HCT116 (cell line): ENCODE measurements at regions of chr2 and their contacts with region 1.

Region 1: GRCh38 chr2:127759931-127760330 is 51.0 kb downstream of the WDR33 start:
- DNase-seq: no peak
- ATAC-seq: no peak
- H3K4me3 ChIP-seq: no peak overlapping the region
- H3K27ac ChIP-seq: no peak overlapping the region
- H3K4me1 ChIP-seq: no peaks in the 10 kb centered on the region
- H3K27me3 ChIP-seq: no peaks in the 10 kb centered on the region
- CTCF ChIP-seq: no peak
- POLR2A ChIP-seq: no peak
- RAD21 ChIP-seq: no peak

Region 2: GRCh38 chr2:127591221-127591923 is 168.6 kb before region 1 on chr2:
- CTCF ChIA-PET with region 1: no interaction called
- POLR2A ChIA-PET with region 1: no interaction called
- RAD21 ChIA-PET with region 1: no interaction called
- intact Hi-C with region 1: no loop called
- DNase-seq: peak; percentile 64
- ATAC-seq: peak; percentile 98
- H3K4me3 ChIP-seq: no peak overlapping the region
- H3K27ac ChIP-seq: no peak overlapping the region
- H3K4me1 ChIP-seq: peaks cover 0 to 8% of the 10 kb centered on the region in 2 experiments; a peak in 1 of 4 replicates
- H3K27me3 ChIP-seq: no peaks in the 10 kb centered on the region
- CTCF ChIP-seq: peak; percentile 97 to 100 (median 99)
- POLR2A ChIP-seq: no peak
- RAD21 ChIP-seq: peak; percentile 98

Region 3: DNA sequence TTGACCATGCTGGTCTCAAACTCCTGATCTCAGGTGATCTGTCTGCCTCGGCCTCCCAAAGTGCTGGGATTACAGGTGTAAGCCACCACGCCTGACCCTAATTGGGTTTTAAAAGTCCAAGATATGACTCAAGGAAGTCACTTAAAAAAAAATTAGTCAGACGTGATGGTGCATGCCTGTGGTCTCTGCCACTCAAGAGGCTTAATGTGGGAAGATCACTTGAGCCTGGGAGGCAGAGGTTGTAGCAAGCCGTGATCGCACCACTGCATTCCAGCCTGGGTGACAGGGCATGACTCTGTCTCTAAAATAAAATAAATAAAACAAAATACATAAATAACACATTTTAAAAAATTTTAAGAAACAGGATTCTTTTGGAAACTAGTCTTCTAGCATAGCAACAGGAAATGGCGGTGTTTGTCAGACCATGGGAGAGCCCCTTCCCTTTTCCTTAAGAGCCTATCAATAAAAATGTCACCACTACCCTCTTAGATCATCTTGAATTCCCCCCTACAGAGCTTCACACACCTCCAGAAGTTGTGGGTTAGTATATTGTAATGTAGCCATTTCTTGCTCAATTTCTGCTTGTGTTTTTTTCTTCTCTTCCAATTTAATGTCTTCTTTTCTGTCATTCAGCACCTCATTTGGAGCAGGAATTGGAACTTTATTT is 38.5 kb before region 1 on chr2:
- CTCF ChIA-PET with region 1: no interaction called
- POLR2A ChIA-PET with region 1: no interaction called
- RAD21 ChIA-PET with region 1: no interaction called
- intact Hi-C with region 1: loop called (anchors 5 kb)
- DNase-seq: no peak
- ATAC-seq: no peak; the same call in 1 of the 2 replicates
- H3K4me3 ChIP-seq: no peak overlapping the region
- H3K27ac ChIP-seq: peak overlapping the region; percentile 18; the same call in 1 of the 2 replicates
- H3K4me1 ChIP-seq: peaks cover 0 to 10% of the 10 kb centered on the region in 2 experiments; a peak in 2 of 4 replicates
- H3K27me3 ChIP-seq: no peaks in the 10 kb centered on the region
- CTCF ChIP-seq: no peak
- POLR2A ChIP-seq: no peak
- RAD21 ChIP-seq: no peak